HCT116 (cell line): ENCODE measurements at regions of chr18 and their contacts with region 1.

Region 1: GRCh38 chr18:11339188-11339775 is 189.9 kb upstream of the PIEZO2 start:
- DNase-seq: no peak
- ATAC-seq: no peak
- H3K4me3 ChIP-seq: no peak overlapping the region
- H3K27ac ChIP-seq: no peak overlapping the region
- H3K4me1 ChIP-seq: no peaks in the 10 kb centered on the region
- H3K27me3 ChIP-seq: 0 out of 2 replicates have a peak, but pooled peaks cover 7% of the 10 kb centered on the region
- CTCF ChIP-seq: no peak
- POLR2A ChIP-seq: no peak
- RAD21 ChIP-seq: no peak

Region 2: DNA sequence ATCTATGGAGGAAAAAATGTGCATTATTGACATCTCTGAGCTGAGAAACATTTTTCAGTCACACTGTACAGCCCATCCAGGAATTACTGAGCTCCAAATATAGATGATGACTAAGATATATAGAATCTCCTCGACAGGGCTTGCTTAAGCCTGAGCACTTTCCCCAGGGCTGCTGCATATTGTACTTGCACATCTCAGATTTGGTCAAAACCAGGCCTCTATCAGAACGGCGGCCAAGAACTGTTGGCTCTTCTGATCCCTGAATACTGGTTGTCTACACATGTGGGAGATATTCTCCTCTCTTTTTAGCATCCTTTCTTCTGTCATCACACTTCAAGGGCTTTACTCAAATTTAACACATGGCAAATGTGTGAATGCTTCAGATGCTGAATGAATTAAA is 68.7 kb after region 1 on chr18:
- CTCF ChIA-PET with region 1: no interaction called
- POLR2A ChIA-PET with region 1: no interaction called
- RAD21 ChIA-PET with region 1: no interaction called
- intact Hi-C with region 1: loop called (anchors 10 kb)
- DNase-seq: no peak
- ATAC-seq: no peak
- H3K4me3 ChIP-seq: no peak overlapping the region
- H3K27ac ChIP-seq: no peak overlapping the region
- H3K4me1 ChIP-seq: no peaks in the 10 kb centered on the region
- H3K27me3 ChIP-seq: peaks cover 15% of the 10 kb centered on the region; the same call in 1 of the 2 replicates
- CTCF ChIP-seq: no peak
- POLR2A ChIP-seq: no peak
- RAD21 ChIP-seq: no peak